ENCODE measurements at regions of chr12 and their contacts with region 1.

Region 1: DNA sequence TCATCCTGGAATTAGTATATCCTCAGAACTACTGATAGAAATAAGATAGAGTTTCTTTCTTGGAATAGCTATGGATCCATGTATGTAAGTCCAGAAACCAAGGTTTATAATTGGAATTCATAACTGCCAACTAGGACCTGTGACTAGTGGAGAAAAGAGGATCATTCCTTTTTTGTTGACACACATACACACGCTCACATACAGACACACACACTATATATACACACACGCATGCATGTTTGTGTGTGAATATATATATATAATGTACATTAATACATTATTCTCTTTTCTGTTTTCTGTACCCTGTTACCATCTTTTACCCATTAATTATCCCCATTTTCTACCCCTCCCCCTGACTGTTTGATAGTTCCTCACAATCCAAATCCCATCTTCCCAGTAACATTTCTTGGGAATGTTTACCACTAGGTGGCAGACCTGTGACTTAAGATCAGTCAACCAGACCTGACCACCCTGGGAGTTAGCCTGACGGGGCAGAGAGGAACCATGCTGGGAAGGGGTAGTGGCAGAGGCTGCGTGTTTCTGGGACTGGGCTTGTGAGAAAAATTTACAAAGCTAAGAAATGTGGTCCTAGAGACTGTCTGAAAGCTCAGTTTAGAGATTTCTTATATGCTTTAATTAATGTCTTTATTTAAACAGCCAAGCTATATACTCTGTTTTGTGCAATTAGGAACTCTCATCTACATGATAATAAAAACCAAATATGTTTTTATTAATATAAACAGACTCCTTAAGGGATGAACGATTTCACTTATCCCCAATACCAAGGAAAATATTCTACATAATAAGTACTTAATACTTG is 308.0 kb downstream of the PPFIA2 start:
- DNase-seq: peak; percentile 45
- H3K4me3 ChIP-seq: no peak overlapping the region
- H3K27ac ChIP-seq: no peak overlapping the region
- H3K4me1 ChIP-seq: no peaks in the 10 kb centered on the region
- CTCF ChIP-seq: peak; percentile 80

Region 2: DNA sequence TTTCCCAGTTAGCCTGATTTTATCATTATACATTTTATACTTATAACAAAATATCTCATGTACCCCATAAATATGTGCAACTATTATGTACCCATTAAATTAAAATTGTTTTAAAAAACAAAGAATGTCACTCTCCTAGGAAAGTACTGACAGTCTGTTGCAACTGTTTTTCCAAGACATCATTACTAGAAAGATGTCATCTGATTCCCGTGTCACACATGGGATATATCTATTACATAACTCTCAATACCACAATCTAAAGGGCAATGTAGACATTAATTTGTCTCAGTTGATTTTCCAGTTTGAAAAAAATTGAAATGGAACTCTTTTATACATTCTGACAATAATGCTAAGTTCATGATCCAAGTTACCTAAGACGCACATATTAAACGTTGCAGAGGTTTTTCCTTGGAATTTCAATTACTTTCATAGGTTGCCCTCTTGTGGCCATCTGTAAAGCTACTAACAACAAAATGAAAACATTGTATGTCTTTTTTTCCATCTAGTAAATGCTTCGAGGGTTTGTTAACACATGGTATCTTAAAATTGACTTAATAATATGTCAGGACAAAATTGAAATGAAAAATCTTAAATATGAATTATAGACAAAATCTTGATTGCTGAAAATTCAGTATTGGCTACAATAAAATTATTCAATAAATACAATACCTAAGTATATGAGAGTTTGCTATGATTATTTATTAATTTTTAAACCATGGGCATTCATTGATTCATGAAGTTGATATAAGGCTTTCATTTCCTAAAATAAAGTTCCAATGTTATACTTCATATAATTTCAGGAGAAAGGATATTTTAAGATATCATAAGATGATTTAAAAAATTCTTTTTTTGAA is 176.4 kb after region 1 on chr12:
- CTCF ChIA-PET with region 1: no interaction called
- POLR2A ChIA-PET with region 1: no interaction called
- intact Hi-C with region 1: loop called (anchors 5 kb)
- DNase-seq: peak; percentile 34
- H3K4me3 ChIP-seq: no peak overlapping the region
- H3K27ac ChIP-seq: no peak overlapping the region
- H3K4me1 ChIP-seq: no peaks in the 10 kb centered on the region
- CTCF ChIP-seq: peak; percentile 89

Measured in OCI-LY7 (cell line).